Adrenal gland (tissue), 19 donors: ENCODE measurements at regions of chr20 and their contacts with region 1.

Region 1: GRCh38 chr20:45963059-45964005 is 8.7 kb downstream of the ZNF335 start:
- DNase-seq: peak in 5 of 7 donors; percentile 16 to 54 (median 27)
- H3K4me3 ChIP-seq: no peak overlapping the region
- H3K27ac ChIP-seq: no peak overlapping the region
- H3K4me1 ChIP-seq: no peaks in the 10 kb centered on the region
- H3K27me3 ChIP-seq: no peaks in the 10 kb centered on the region
- CTCF ChIP-seq: peak; percentile 11 to 59 (median 52)
- POLR2A ChIP-seq: no peak

Region 2: GRCh38 chr20:45801851-45802250 is 161.5 kb before region 1 on chr20:
- intact Hi-C with region 1: loop called in 1 of 2 experiments (anchors 5 kb)
- DNase-seq: no peak
- H3K4me3 ChIP-seq: no peak overlapping the region
- H3K27ac ChIP-seq: no peak overlapping the region
- H3K4me1 ChIP-seq: no peaks in the 10 kb centered on the region
- H3K27me3 ChIP-seq: no peaks in the 10 kb centered on the region
- CTCF ChIP-seq: no peak
- POLR2A ChIP-seq: no peak

Region 3: GRCh38 chr20:45823949-45824835 is 139.1 kb before region 1 on chr20:
- intact Hi-C with region 1: loop called in 1 of 2 experiments (anchors 5 kb)
- DNase-seq: peak; percentile 64 to 78 (median 72)
- H3K4me3 ChIP-seq: peak overlapping the region in 1 of 4 donors; percentile 2
- H3K27ac ChIP-seq: no peak overlapping the region
- H3K4me1 ChIP-seq: peaks cover 9 to 29% of the 10 kb centered on the region in 2 donors
- H3K27me3 ChIP-seq: no peaks in the 10 kb centered on the region
- CTCF ChIP-seq: peak; percentile 28 to 68 (median 57)
- POLR2A ChIP-seq: no peak

Region 4: DNA sequence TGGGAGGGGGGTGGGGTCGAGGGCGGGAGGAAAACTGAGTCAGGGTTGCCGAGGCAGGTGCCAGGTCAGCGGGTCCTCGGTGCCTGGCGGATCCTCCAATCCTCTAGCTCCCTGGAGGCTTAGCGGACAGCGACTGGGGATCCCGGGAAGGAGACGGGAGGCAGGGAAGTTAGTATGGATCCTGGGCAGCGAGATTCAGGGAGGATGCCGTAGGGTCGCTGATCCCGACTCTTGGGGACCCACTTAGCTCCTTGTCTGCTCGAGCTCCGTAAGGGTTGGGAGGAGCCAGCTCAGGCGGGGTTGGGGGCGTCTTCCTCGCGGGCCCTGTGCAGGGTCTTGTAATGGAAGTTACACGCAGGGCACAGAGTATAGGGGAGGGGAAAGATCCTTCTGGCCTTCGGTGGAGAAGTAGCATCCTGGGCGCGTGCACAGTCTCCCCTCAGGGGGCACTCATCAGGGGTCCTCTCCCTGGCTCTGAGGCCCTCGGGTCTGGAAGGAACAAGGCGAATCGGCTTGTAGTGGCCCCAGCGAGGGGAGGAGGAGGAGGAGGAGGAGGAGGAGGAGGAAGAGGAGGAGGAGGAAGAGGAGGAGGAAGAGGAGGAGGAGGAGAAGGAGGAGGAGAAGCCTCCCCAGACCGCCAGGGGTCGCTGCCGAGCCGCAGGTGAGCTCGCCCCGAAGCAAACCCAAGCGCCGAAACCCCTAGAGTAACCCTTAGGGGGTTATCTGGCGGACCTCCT is 59.2 kb after region 1 on chr20:
- intact Hi-C with region 1: no loop called
- DNase-seq: peak in 6 of 7 donors; percentile 53 to 71 (median 70)
- H3K4me3 ChIP-seq: peak overlapping the region in 1 of 4 donors; percentile 83
- H3K27ac ChIP-seq: no peak overlapping the region
- H3K4me1 ChIP-seq: peaks cover 0 to 12% of the 10 kb centered on the region in 2 donors
- H3K27me3 ChIP-seq: no peaks in the 10 kb centered on the region
- CTCF ChIP-seq: peak; percentile 42 to 87 (median 66)
- POLR2A ChIP-seq: no peak